ENCODE measurements at regions of chr12 and their contacts with region 1.

Region 1: DNA sequence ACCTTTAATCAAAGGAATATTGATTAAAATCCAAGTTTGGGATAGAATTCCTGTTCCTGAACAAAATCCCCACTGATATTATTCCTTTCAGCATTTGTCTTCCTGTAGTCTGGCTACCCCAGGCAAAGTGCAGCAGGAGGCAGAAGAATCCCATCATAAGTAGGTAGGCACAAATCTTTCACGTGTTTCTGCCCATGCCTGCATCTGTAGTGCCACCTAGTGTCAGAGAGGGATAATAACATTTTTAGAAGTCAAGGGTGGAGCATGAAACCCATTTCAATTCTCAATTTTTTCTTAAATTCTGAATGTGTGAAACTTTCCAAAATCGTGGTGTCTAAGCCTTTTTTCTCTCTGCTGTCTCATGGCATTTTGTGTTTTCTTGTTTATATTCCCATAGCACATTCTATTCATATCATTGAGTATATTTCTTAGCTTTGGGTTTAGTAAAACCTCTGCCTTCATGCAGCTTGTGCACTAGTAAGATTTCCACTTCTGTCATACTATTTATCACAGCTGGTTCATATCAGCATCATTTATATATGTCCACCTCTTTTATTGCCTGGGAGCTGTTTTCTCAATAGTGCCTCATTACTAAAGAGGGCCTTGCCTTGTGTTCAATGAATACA is 47.8 kb upstream of the RERG start:
- DNase-seq: peak; percentile 56
- ATAC-seq: peak; percentile 46
- H3K4me3 ChIP-seq: no peak overlapping the region
- H3K27ac ChIP-seq: no peak overlapping the region
- H3K4me1 ChIP-seq: peaks cover 6% of the 10 kb centered on the region
- H3K27me3 ChIP-seq: no peaks in the 10 kb centered on the region
- CTCF ChIP-seq: peak; percentile 83

Region 2: DNA sequence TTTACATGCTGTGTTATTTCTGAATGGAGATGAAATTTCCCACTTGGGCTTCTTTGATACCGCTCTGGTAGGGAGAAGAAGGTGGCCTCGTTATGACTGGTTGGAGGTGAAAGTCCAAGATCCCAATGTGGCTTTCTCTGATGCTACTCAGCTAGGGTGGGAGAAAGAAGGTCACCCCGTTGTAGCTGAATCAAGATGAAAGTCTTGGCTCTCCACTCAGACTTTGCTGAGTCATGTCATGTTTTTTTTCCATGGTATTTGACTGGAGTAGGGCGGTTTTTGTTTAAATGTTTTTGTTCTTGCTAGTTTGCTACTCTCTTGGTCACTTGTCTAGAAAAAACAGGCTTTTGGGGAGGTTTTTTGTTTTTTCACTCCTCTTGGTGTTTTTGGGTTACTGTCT is 298.6 kb before region 1 on chr12:
- CTCF ChIA-PET with region 1: no interaction called
- POLR2A ChIA-PET with region 1: no interaction called
- intact Hi-C with region 1: no loop called
- DNase-seq: no peak
- ATAC-seq: no peak
- H3K4me3 ChIP-seq: no peak overlapping the region
- H3K27ac ChIP-seq: no peak overlapping the region
- H3K4me1 ChIP-seq: no peaks in the 10 kb centered on the region
- H3K27me3 ChIP-seq: no peaks in the 10 kb centered on the region
- CTCF ChIP-seq: no peak

Region 3: DNA sequence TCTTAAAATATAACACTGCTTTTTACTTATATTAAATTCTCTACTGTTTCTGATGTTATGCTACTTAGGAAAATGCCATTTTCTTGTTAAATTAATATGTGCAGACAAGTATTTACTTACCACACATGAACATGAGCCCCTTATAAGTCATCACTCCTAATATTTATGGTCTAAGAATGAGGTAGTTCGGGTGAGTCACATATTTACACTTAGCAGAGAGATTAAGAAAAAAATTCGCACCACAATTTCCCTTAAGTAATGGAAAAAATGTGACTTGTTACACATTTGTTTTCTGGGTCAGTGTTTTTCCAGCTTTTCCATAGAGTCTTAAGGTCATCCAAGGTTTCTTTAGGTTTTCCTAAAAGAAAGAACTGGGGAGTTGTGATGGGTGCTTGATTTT is 116.2 kb before region 1 on chr12:
- CTCF ChIA-PET with region 1: no interaction called
- POLR2A ChIA-PET with region 1: no interaction called
- intact Hi-C with region 1: no loop called
- DNase-seq: peak; percentile 39
- ATAC-seq: peak; percentile 24; the same call in 1 of the 2 replicates
- H3K4me3 ChIP-seq: no peak overlapping the region
- H3K27ac ChIP-seq: no peak overlapping the region
- H3K4me1 ChIP-seq: no peaks in the 10 kb centered on the region
- H3K27me3 ChIP-seq: peaks cover 40% of the 10 kb centered on the region
- CTCF ChIP-seq: no peak

Region 4: GRCh38 chr12:15227004-15227679 is 41.9 kb before region 1 on chr12:
- CTCF ChIA-PET with region 1: no interaction called
- POLR2A ChIA-PET with region 1: no interaction called
- intact Hi-C with region 1: loop called (anchors 1 kb)
- DNase-seq: peak; percentile 67
- ATAC-seq: peak; percentile 71
- H3K4me3 ChIP-seq: no peak overlapping the region
- H3K27ac ChIP-seq: no peak overlapping the region
- H3K4me1 ChIP-seq: no peaks in the 10 kb centered on the region
- H3K27me3 ChIP-seq: no peaks in the 10 kb centered on the region
- CTCF ChIP-seq: peak; percentile 76